ENCODE measurements at regions of chr11 and their contacts with region 1.

Region 1: DNA sequence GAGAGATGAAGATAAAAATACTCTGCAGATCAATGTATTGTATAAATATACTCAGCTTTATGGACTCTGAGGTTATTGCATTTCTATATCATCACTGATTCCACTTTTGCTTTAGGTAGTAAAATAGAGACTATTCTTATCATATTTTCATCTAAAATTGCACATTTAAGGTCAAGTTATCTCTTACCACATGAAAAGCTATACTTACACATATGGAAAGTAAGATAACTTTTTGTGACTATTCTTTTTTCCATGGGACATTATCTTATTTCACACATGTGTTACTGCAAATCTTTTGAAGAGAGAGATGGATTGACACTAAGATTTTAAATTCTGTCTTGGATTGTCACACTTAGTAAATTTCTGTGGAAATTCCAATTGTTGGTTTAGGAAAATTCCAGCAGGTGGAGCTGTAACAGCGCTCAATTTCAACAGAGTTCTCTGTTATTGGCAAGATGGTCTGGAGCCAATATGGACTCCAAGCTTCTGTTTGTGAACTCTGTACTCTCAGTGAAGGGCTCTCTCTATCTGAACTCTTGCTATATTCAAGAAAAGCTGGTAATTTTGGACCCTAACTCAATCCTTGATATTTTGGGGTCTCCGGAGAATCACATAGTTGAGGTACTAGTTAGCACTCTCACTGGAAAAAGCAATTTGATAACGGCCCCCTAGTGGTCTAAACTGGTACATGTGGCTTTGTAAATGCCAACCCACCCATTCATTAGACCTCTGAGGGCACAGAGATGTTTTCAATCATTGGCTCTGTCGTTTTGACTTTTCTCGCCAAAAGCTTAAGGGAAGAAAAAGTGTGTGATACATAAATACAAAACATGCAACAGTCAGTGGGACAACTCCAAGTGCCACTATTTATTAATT is 429.7 kb downstream of the ETS1 start:
- DNase-seq: peak; percentile 60 to 80 (median 76)
- H3K4me3 ChIP-seq: peak overlapping the region; percentile 13 to 27
- H3K4me3 Mint-ChIP-seq: peak overlapping the region; percentile 77 to 91 (median 85)
- H3K27ac ChIP-seq: no peak overlapping the region
- H3K27ac Mint-ChIP-seq: peak overlapping the region in 5 of 7 donors; percentile 54 to 73 (median 61)
- H3K4me1 ChIP-seq: no peaks in the 10 kb centered on the region
- H3K4me1 Mint-ChIP-seq: peaks cover 0 to 8% (median 5%) of the 10 kb centered on the region in 4 donors
- H3K27me3 ChIP-seq: no peaks in the 10 kb centered on the region
- H3K27me3 Mint-ChIP-seq: no peaks in the 10 kb centered on the region

Region 2: GRCh38 chr11:128026596-128026995 is 131.1 kb before region 1 on chr11:
- CTCF ChIA-PET with region 1: interaction called, 111 read pairs
- POLR2A ChIA-PET with region 1: interaction called, 4 read pairs
- intact Hi-C with region 1: loop called (anchors 1 kb)
- DNase-seq: no peak
- H3K4me3 ChIP-seq: no peak overlapping the region
- H3K4me3 Mint-ChIP-seq: no peak overlapping the region
- H3K27ac ChIP-seq: no peak overlapping the region
- H3K27ac Mint-ChIP-seq: no peak overlapping the region
- H3K4me1 ChIP-seq: no peaks in the 10 kb centered on the region
- H3K4me1 Mint-ChIP-seq: peaks cover 0 to 4% (median 1%) of the 10 kb centered on the region in 4 donors
- H3K27me3 ChIP-seq: no peaks in the 10 kb centered on the region
- H3K27me3 Mint-ChIP-seq: peaks cover 3 to 4% of the 10 kb centered on the region in 2 donors

Region 3: GRCh38 chr11:128069665-128070064 is 88.0 kb before region 1 on chr11:
- CTCF ChIA-PET with region 1: interaction called, 11 read pairs
- POLR2A ChIA-PET with region 1: no interaction called
- intact Hi-C with region 1: no loop called
- DNase-seq: no peak
- H3K4me3 ChIP-seq: no peak overlapping the region
- H3K4me3 Mint-ChIP-seq: no peak overlapping the region
- H3K27ac ChIP-seq: no peak overlapping the region
- H3K27ac Mint-ChIP-seq: no peak overlapping the region
- H3K4me1 ChIP-seq: no peaks in the 10 kb centered on the region
- H3K4me1 Mint-ChIP-seq: peaks cover 4 to 19% (median 10%) of the 10 kb centered on the region in 4 donors
- H3K27me3 ChIP-seq: no peaks in the 10 kb centered on the region
- H3K27me3 Mint-ChIP-seq: no peaks in the 10 kb centered on the region

Region 4: GRCh38 chr11:128116885-128117284 is 40.8 kb before region 1 on chr11:
- CTCF ChIA-PET with region 1: no interaction called
- POLR2A ChIA-PET with region 1: no interaction called
- intact Hi-C with region 1: no loop called
- DNase-seq: no peak
- H3K4me3 ChIP-seq: no peak overlapping the region
- H3K4me3 Mint-ChIP-seq: no peak overlapping the region
- H3K27ac ChIP-seq: no peak overlapping the region
- H3K27ac Mint-ChIP-seq: peak overlapping the region in 2 of 7 donors; percentile 38 to 65
- H3K4me1 ChIP-seq: no peaks in the 10 kb centered on the region
- H3K4me1 Mint-ChIP-seq: peaks cover 0 to 1% (median 0%) of the 10 kb centered on the region in 4 donors
- H3K27me3 ChIP-seq: no peaks in the 10 kb centered on the region
- H3K27me3 Mint-ChIP-seq: peaks cover 0 to 2% of the 10 kb centered on the region in 2 donors

Region 5: DNA sequence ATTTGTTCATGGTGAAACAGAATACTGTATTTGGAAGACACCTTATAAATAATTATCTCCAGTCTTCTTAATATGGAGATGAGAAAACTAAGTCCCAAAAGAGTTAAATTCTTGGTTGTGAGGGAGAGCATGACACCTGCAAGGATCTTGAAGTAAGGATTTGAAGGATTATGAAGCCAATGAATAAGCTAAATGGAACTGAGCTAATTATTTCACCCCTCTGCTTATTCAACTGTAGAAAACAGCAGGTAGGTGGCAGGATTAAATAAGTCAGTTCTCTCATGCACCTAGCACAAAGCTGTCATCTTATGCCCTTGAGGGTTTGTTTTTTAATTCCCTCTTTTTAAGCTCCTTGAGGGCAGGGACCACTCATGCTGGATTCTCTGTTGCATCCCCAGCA is 27.6 kb before region 1 on chr11:
- CTCF ChIA-PET with region 1: interaction called, 39 read pairs
- POLR2A ChIA-PET with region 1: no interaction called
- intact Hi-C with region 1: no loop called
- DNase-seq: no peak
- H3K4me3 ChIP-seq: no peak overlapping the region
- H3K4me3 Mint-ChIP-seq: no peak overlapping the region
- H3K27ac ChIP-seq: no peak overlapping the region
- H3K27ac Mint-ChIP-seq: peak overlapping the region in 1 of 7 donors; percentile 19
- H3K4me1 ChIP-seq: no peaks in the 10 kb centered on the region
- H3K4me1 Mint-ChIP-seq: peaks cover 0 to 13% (median 4%) of the 10 kb centered on the region in 4 donors
- H3K27me3 ChIP-seq: no peaks in the 10 kb centered on the region
- H3K27me3 Mint-ChIP-seq: no peaks in the 10 kb centered on the region

Region 6: DNA sequence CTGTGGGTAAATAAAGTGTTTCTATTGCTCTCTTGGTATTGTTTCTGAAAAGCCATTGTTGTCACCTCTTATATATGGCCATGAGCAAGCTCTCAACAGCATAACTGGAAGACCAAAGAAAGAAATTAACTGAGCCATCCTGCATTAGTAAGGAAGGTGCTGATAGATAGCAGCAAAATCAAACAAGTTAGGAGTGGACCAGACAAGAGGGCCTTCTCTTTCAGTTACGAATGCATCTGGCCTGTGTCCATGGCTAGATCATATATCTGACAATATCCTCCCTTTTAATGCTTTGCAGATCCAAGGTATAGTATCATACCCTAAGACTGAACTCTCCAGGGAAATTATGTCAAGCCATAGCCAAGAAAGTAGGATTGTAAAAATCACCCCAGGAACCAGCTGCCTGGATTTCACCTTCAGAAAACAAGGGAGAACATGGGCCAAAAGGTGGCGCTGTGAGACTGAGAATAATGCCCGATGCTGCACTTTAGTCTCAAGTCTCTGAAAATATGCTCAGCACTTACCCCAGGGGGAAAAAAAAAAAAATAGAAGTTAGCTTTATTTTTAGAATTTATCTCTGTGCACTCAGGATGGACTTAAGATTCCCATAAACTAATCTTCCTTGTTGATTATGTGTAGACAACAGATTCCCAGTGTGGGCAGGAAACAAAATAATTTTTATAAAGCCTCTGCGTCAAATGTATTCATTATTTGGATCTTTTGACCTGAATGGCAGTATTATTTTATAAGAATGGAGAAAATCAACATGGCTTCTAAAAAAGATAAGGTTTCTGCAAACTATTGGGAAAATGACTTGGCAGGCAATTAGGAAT is 14.6 kb after region 1 on chr11:
- CTCF ChIA-PET with region 1: interaction called, 122 read pairs
- POLR2A ChIA-PET with region 1: interaction called, 3 read pairs
- intact Hi-C with region 1: no loop called
- DNase-seq: peak; percentile 75 to 81 (median 77)
- H3K4me3 ChIP-seq: no peak overlapping the region
- H3K4me3 Mint-ChIP-seq: no peak overlapping the region
- H3K27ac ChIP-seq: no peak overlapping the region
- H3K27ac Mint-ChIP-seq: peak overlapping the region in 1 of 7 donors; percentile 11
- H3K4me1 ChIP-seq: no peaks in the 10 kb centered on the region
- H3K4me1 Mint-ChIP-seq: peaks cover 0 to 4% (median under 1%) of the 10 kb centered on the region in 4 donors
- H3K27me3 ChIP-seq: no peaks in the 10 kb centered on the region
- H3K27me3 Mint-ChIP-seq: no peaks in the 10 kb centered on the region

Region 7: DNA sequence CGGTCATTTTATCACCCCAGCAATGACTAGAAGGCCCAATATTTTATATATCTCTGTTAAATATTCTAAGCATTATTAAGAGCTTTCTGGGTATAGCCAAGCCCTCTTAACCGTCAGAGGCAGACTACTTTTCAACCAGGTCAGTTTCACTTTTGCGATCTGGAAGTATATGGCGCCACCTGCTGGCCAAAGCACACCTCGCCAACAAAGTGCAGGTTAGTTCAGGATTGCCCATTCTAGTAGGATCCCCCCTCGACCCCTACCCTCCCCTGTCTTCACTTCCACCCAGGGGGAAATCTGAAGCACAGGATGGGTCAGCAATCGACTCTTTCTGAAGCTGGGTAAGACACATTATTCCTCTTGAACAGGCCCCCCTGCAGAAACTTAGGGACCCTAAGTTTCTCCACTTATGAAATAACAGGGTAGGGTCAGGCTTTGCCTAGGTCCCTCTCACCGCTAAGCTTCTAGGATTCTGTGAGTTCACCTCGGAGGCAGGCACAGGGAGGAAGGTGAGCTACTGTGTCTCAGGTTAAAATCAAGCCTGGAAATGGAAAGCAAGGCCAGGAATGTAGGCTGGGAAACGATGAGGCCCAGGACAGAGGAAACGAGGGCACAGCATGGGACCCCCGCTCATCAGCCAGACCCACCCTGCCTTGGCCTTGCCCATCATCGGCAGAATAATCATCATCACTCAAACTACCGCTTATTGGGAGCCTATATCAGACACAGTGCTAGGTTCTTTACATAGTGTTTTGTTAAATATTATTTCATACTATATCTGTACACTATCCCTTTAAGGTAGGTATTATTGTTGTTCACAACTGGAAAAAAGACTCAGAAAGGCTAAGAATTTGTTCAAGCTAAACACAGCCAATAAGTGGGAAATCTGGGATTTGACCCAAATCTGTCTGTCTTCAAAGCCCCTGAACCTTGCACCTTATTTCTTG is 673.8 kb after region 1 on chr11:
- CTCF ChIA-PET with region 1: interaction called, 122 read pairs
- POLR2A ChIA-PET with region 1: interaction called, 5 read pairs
- intact Hi-C with region 1: loop called (anchors 1 kb)
- DNase-seq: peak; percentile 79 to 85 (median 83)
- H3K4me3 ChIP-seq: peak overlapping the region in 1 of 2 donors; percentile 12
- H3K4me3 Mint-ChIP-seq: peak overlapping the region; percentile 46 to 91 (median 82)
- H3K27ac ChIP-seq: peak overlapping the region; percentile 76
- H3K27ac Mint-ChIP-seq: peak overlapping the region; percentile 86 to 98 (median 97)
- H3K4me1 ChIP-seq: peaks cover 24% of the 10 kb centered on the region
- H3K4me1 Mint-ChIP-seq: peaks cover 21 to 49% (median 36%) of the 10 kb centered on the region in 4 donors
- H3K27me3 ChIP-seq: no peaks in the 10 kb centered on the region
- H3K27me3 Mint-ChIP-seq: no peaks in the 10 kb centered on the region

Region 8: DNA sequence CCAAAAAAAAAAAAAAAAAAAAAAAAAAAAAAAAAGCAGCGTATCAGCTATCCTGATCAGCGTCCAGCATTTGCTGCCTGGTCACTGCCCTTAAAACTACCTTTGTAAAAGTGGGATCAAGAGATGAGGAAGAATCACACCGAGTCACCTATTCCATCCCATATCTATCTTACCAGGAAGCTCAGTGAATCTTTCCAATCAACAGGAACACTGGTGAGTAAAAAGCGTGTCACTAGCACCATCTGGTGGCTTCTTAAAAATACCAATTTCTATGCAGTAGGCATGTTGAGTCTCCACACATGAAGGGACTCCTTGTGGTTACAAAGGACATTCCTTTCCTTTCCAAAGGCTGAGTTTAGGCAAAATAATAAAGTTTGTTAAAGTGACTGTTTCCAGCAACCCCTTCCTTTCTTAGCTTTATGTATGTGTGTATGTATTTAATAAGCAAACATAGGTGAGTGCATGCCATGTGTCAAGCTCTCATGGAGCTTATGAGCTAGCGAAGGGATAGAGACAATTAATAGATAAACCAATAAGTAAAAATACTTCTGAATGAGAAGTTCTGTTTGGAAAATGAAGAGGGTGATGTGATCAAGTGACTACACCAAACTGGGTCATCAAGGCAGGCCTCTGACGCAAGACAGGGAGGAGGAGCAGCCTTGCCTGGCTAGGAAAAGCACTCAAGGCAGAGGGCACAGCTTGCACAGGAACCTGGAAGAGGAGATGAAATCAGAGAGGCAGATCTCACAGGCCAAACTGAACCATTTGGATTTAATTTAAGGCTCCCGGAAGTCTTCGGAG is 798.9 kb after region 1 on chr11:
- CTCF ChIA-PET with region 1: interaction called, 11 read pairs
- POLR2A ChIA-PET with region 1: no interaction called
- intact Hi-C with region 1: loop called (anchors 1 kb)
- DNase-seq: peak in 4 of 5 donors; percentile 34 to 41 (median 38)
- H3K4me3 ChIP-seq: no peak overlapping the region
- H3K4me3 Mint-ChIP-seq: no peak overlapping the region
- H3K27ac ChIP-seq: no peak overlapping the region
- H3K27ac Mint-ChIP-seq: no peak overlapping the region
- H3K4me1 ChIP-seq: no peaks in the 10 kb centered on the region
- H3K4me1 Mint-ChIP-seq: peaks cover 0 to 2% (median under 1%) of the 10 kb centered on the region in 4 donors
- H3K27me3 ChIP-seq: no peaks in the 10 kb centered on the region
- H3K27me3 Mint-ChIP-seq: peaks cover 6 to 14% of the 10 kb centered on the region in 2 donors